ENCODE measurements at regions of chr1 and their contacts with region 1.

Region 1: GRCh38 chr1:180482425-180483275 is 19.7 kb downstream of the ACBD6 start:
- DNase-seq: no peak
- H3K4me3 ChIP-seq: no peak overlapping the region
- CTCF ChIP-seq: peak; percentile 49

Region 2: DNA sequence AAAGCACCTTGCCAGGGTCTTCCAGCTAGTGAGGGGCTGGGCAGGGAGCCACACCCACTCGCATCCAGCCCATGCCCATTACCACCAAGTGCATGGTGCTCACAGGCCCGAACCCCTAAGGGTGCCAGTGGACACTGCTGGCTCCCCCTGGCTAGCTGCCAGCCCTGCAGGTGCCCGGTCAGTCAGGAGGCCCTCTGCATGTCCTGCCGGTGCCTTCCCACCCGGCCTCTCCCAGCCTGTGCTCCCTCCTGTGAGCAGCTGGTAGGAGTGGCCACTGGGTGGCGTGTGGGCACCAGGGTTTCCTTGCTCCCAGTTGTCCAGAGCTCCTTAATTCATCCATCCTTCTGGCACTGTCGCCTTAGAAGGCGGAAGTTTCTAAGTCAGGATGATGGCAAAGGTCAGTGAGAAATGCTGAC is 294.6 kb before region 1 on chr1:
- CTCF ChIA-PET with region 1: interaction called, 86 read pairs
- POLR2A ChIA-PET with region 1: no interaction called
- DNase-seq: no peak
- H3K4me3 ChIP-seq: no peak overlapping the region
- CTCF ChIP-seq: peak; percentile 86

Region 3: DNA sequence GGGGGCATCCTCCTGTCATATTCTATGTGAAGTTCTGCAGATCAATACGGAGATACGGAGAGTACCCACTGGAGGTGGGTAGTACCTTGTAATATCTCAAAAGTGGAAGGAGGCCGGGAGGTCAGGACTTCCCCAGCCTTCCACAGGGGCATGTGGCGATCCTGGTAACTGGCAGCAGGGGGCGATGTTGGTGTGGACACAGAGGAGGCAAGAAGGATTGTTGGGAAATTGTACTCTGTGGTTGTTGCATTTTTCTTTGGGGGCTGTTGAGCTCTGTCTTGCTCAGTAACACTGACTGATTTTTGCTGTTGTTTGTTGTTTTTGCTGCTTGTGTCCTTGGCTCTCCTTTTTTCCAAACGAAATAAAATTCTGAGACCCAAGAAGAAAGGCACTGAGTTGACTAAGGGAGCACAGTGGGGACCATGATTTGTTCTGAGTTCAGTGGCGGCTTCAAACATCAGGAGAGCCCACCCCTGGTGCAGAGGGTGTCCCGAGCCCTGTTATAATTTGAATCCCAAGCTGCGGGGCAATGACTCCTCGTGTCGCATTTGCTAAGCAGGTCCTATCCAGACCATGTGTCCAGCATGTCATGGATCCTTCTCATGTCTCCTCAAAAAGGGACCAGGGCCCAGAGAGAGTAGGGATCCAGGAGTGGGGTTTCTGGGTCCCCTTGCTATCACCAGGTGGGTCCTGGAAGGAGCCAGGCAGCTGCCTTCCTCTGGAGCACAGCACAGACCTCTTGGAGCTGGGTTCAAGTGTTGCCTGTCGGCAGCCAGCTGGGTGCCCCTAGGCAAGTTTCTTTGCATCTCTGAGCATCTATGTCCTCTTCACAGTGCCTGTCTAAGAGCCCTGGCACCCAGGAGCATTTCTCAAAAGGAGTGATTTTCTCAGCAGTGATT is 229.8 kb before region 1 on chr1:
- CTCF ChIA-PET with region 1: interaction called, 120 read pairs
- POLR2A ChIA-PET with region 1: no interaction called
- DNase-seq: no peak
- H3K4me3 ChIP-seq: no peak overlapping the region
- CTCF ChIP-seq: peak; percentile 82

Region 4: GRCh38 chr1:180269761-180270527 is 212.7 kb before region 1 on chr1:
- CTCF ChIA-PET with region 1: interaction called, 14 read pairs
- POLR2A ChIA-PET with region 1: no interaction called
- DNase-seq: no peak
- H3K4me3 ChIP-seq: no peak overlapping the region
- CTCF ChIP-seq: peak; percentile 53

Region 5: DNA sequence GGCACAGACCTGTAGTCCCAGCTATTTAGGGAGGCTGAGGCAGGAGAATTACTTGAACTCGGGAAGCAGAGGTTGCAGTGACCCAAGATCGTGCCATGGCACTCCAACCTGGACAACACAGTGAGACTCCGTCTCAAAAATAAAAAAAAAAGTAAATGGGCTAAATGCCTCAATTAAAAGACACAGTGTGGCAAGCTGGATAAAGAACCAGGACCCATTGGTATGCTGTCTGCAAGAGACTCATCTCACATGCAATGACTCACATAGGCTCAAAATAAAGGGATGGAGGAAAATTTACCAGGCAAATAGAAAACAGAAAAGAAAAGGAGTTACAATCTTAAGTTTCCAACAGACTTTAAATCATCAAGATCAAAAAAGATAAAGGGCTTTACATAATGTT is 20.5 kb before region 1 on chr1:
- CTCF ChIA-PET with region 1: interaction called, 120 read pairs
- POLR2A ChIA-PET with region 1: no interaction called
- DNase-seq: no peak
- H3K4me3 ChIP-seq: no peak overlapping the region
- CTCF ChIP-seq: no peak

Region 6: DNA sequence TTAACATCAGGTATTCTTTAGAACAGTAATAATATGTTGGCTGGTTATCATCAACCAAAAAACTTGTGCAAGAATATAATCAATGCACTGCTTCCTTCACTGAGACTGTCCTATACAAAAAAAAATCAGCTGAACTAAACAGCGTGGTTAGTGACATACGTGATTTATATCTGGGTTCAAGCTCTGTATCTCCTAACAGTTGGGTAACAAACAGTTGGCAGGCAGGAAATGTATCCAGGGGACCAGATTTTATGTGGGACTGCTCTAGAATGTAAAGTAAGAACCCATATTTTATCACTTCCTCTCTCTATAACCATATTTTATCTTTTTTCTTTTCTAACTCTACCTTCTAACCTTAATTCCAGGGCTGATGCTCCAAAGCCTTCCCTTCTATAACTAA is 11.7 kb after region 1 on chr1:
- CTCF ChIA-PET with region 1: interaction called, 46 read pairs
- POLR2A ChIA-PET with region 1: no interaction called
- DNase-seq: no peak
- H3K4me3 ChIP-seq: no peak overlapping the region
- CTCF ChIP-seq: no peak

Measured in AG04449 (cell line).